GM10248 (cell line): ENCODE measurements at regions of chr2 and their contacts with region 1.

Region 1: DNA sequence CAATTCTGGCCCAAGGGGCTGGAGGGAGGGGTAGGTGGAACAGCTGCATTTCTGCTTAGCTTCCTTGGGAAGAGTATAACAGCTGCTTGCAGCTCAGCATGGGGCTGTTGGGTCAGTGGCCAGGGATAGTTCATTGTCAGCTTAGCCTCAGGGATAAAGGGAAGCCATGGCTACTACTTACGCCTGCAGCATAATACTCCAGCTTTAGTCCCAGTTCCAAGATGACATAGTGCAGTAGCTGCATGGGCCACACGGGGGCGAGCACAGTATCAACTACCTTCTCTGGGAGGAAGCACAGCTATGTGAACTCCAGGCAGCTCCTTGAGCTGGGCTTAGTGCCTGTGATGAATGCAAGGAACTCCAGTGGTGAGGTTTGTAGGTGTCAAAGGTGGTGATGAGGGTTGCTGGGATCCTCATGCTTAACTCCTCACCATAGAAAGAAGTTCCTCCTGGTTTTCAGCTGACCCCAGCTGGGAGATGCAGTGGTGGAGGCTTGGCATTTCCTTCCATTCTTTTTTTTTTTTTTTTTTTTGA is 35.4 kb upstream of the RHOB start:
- DNase-seq: peak; percentile 82
- CTCF ChIP-seq: peak; percentile 86

Region 2: GRCh38 chr2:20378792-20379519 is 32.5 kb before region 1 on chr2:
- CTCF ChIA-PET with region 1: interaction called, 49 read pairs
- POLR2A ChIA-PET with region 1: no interaction called
- DNase-seq: no peak
- CTCF ChIP-seq: peak; percentile 44

Region 3: DNA sequence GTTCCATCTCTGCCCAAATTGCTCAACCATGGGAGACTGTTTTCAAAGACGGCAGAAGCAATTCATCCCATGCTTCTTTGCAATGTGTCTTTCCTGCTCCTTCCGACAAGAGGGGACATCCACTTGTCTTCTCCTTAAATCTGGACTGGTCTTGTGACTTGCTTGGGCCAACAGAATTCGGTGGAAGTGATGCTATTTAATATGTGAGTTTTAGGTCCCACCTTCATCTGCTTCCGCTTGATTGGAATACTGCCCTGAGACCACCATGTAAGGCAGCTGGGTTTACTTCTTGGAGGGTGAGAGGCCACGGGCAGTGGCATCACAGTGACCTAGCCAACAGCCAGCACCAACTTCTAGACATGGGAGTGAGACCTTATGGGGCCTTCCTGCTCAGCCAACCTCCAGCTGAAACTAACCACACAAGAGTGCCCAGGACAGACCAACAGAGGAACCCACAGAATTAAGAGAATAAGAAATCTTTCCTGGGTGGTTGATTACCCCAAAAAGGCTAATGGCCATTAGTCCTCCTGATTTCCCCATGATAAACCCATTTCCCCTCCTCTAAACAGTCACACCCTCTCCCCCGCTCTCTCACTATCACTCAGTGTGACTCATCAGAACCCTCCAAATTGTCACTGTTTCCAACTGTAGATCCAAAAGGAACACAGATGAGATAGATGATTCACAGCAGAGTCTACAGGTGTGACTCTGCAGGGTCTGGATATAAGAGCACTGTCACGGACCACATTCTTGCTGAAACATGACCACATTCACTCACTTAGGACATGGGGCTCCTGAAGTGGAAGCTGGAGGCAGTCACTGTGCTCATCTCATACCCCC is 19.3 kb after region 1 on chr2:
- CTCF ChIA-PET with region 1: interaction called, 162 read pairs
- POLR2A ChIA-PET with region 1: no interaction called
- DNase-seq: no peak
- CTCF ChIP-seq: no peak

Region 4: DNA sequence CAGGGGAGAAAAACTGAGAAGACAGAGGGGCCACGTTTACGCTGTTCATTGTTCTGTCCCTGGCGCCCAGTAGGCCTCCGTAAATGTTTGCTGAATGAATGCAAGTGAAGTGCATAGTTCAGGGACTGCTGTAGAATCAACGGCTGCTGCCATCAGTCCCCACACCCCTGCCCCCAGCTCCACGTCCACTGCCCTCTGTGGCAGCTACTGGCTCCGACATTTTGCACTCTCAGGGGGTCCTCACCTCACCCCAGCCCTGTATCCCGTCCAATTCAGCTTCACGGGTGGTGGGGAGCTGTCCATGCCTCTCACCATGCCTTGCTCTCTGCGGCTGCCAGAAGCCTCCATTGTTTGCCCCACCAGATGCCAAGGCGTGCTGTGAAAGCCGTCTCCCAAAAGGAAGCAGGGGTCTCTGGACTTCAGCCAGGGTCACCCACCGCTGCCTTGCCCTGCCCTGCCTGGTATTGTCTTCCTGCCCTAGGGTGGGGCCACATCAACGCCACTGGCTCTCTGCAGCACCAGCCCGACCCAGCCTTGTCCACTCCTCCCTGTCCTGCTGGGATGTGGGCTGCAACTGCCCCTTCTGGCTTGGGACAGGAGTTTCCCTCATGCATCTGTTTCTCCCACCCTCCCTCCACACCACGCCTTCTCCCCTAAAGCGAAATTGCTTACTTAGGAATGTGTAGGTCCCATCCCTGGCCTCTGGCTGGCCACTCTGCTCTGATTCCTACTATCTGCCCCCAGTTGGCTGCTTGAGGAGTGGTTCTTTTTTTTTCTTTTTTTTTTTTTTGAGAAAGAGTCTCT is 121.4 kb after region 1 on chr2:
- CTCF ChIA-PET with region 1: no interaction called
- POLR2A ChIA-PET with region 1: no interaction called
- DNase-seq: no peak
- CTCF ChIP-seq: no peak

Region 5: DNA sequence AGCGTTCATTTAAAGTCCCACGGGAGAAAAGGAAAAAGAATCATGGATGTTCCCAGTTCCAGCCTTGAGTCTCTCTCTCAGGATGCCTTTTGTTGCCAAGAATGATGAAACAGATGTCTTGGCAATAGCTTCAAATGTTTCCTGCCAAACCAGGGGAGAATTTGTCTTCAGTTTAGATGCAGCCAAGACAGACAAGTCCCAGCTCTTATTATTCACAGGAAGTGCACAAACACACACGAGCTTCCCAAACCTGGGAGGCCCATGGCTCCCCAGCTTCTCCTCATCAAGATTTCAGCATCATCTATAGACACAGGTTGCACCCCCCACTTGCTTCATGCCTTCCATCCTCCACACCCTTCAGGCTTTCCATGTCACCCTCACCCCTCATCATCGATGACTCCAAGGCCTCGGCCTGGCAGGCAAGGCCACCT is 193.5 kb after region 1 on chr2:
- CTCF ChIA-PET with region 1: interaction called, 11 read pairs
- POLR2A ChIA-PET with region 1: no interaction called
- DNase-seq: no peak
- CTCF ChIP-seq: no peak

Region 6: GRCh38 chr2:20650880-20651730 is 239.7 kb after region 1 on chr2 and contains the start of gene HS1BP3:
- CTCF ChIA-PET with region 1: interaction called, 52 read pairs
- POLR2A ChIA-PET with region 1: no interaction called
- DNase-seq: peak; percentile 98
- CTCF ChIP-seq: peak; percentile 99